PC-3 (cell line): ENCODE measurements at regions of chr6 and their contacts with region 1.

Region 1: GRCh38 chr6:97394160-97394748 is 111.2 kb upstream of the MMS22L start:
- DNase-seq: peak; percentile 77
- ATAC-seq: no peak
- H3K4me3 ChIP-seq: no peak overlapping the region
- H3K27ac ChIP-seq: no peak overlapping the region
- H3K4me1 ChIP-seq: no peaks in the 10 kb centered on the region
- H3K27me3 ChIP-seq: peaks cover 18% of the 10 kb centered on the region
- CTCF ChIP-seq: peak; percentile 79

Region 2: GRCh38 chr6:97068211-97068610 is 326.0 kb before region 1 on chr6:
- CTCF ChIA-PET with region 1: no interaction called
- POLR2A ChIA-PET with region 1: no interaction called
- intact Hi-C with region 1: loop called (anchors 1 kb)
- DNase-seq: peak; percentile 28
- ATAC-seq: no peak
- H3K4me3 ChIP-seq: no peak overlapping the region
- H3K27ac ChIP-seq: no peak overlapping the region
- H3K4me1 ChIP-seq: no peaks in the 10 kb centered on the region
- H3K27me3 ChIP-seq: 0 out of 2 replicates have a peak, but pooled peaks cover 9% of the 10 kb centered on the region
- CTCF ChIP-seq: peak; percentile 64

Region 3: DNA sequence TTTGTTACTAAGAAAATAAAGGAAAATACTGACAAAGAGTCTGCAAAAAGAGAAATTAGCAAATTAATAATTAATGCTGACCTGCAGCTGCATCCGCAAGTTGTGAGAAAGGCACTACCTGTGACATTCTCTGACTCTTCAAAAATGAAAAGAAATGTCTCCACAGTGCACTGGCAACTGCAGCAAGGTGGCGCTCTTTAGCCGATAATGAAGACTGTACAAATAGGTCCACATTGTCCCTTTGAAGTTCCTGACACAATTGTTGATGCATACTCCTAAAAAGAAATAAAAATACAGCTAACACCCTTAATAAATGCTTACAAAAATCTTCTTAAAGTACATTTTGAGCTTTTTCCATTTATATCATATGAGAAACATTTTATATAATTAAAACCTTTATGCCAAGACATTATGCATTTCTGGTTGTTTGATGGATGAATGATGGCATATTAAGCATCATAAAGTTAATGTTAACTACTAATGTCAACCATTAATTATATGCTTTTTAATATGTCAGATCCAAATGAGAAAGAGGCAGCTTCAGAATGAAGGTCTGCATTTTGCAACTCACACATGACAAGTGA is 207.7 kb before region 1 on chr6:
- CTCF ChIA-PET with region 1: no interaction called
- POLR2A ChIA-PET with region 1: no interaction called
- intact Hi-C with region 1: loop called (anchors 1 kb)
- DNase-seq: peak; percentile 62
- ATAC-seq: peak; percentile 83
- H3K4me3 ChIP-seq: no peak overlapping the region
- H3K27ac ChIP-seq: no peak overlapping the region
- H3K4me1 ChIP-seq: no peaks in the 10 kb centered on the region
- H3K27me3 ChIP-seq: no peaks in the 10 kb centered on the region
- CTCF ChIP-seq: peak; percentile 83

Region 4: GRCh38 chr6:97215157-97215769 is 179.0 kb before region 1 on chr6:
- CTCF ChIA-PET with region 1: no interaction called
- POLR2A ChIA-PET with region 1: no interaction called
- intact Hi-C with region 1: loop called (anchors 2 kb)
- DNase-seq: peak; percentile 55
- ATAC-seq: peak; percentile 66
- H3K4me3 ChIP-seq: no peak overlapping the region
- H3K27ac ChIP-seq: no peak overlapping the region
- H3K4me1 ChIP-seq: no peaks in the 10 kb centered on the region
- H3K27me3 ChIP-seq: no peaks in the 10 kb centered on the region
- CTCF ChIP-seq: peak; percentile 54

Region 5: GRCh38 chr6:97282726-97283617 is 111.3 kb before region 1 on chr6 and contains the start of gene MMS22L:
- CTCF ChIA-PET with region 1: no interaction called
- POLR2A ChIA-PET with region 1: no interaction called
- intact Hi-C with region 1: loop called (anchors 1 kb)
- DNase-seq: peak; percentile 91
- ATAC-seq: peak; percentile 95
- H3K4me3 ChIP-seq: peak within 1 kb of the TSS; percentile 98
- H3K27ac ChIP-seq: no peak within 1 kb of the TSS
- H3K4me1 ChIP-seq: 0 out of 2 replicates have a peak, but pooled peaks cover 15% of the 10 kb centered on the region
- H3K27me3 ChIP-seq: no peaks in the 10 kb centered on the region
- CTCF ChIP-seq: no peak
- total RNA-seq, gene MMS22L: 19.3 and 23.8 TPM in 2 replicates

Region 6: DNA sequence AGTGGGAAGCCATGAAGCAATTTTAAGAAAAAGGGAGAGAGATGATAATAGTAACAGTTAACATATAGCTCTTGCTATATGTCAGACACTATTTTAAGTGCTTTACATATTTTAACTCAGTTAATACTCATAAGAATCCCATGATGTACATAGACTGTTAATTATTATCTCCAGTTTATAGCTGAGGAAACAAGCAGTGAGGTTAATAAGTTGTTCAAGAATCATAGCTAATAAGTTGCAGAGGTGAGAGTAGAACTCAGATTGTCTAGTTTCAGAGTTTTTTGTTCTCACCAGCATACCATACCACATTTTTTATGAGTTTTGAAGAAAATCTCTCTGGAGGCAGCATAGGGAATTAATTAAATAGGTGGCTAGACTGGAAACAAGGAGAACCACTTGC is 33.4 kb after region 1 on chr6:
- CTCF ChIA-PET with region 1: no interaction called
- POLR2A ChIA-PET with region 1: no interaction called
- intact Hi-C with region 1: no loop called
- DNase-seq: no peak
- ATAC-seq: no peak
- H3K4me3 ChIP-seq: no peak overlapping the region
- H3K27ac ChIP-seq: no peak overlapping the region
- H3K4me1 ChIP-seq: no peaks in the 10 kb centered on the region
- H3K27me3 ChIP-seq: no peaks in the 10 kb centered on the region
- CTCF ChIP-seq: no peak